Ovary (tissue), 10 donors: ENCODE measurements at regions of chr22 and their contacts with region 1.

Region 1: GRCh38 chr22:28019881-28020871 is 101.1 kb upstream of the PITPNB start:
- DNase-seq: peak; percentile 71 to 87 (median 84)
- H3K4me3 ChIP-seq: no peak overlapping the region
- H3K27ac ChIP-seq: no peak overlapping the region
- H3K4me1 ChIP-seq: peaks cover 12% of the 10 kb centered on the region
- H3K27me3 ChIP-seq: no peaks in the 10 kb centered on the region
- CTCF ChIP-seq: peak; percentile 83 to 95 (median 89)
- EP300 ChIP-seq: no peak
- POLR2A ChIP-seq: no peak

Region 2: GRCh38 chr22:27937453-27937852 is 82.7 kb before region 1 on chr22:
- intact Hi-C with region 1: no loop called
- DNase-seq: no peak
- H3K4me3 ChIP-seq: no peak overlapping the region
- H3K27ac ChIP-seq: no peak overlapping the region
- H3K4me1 ChIP-seq: no peaks in the 10 kb centered on the region
- H3K27me3 ChIP-seq: no peaks in the 10 kb centered on the region
- CTCF ChIP-seq: no peak
- EP300 ChIP-seq: no peak
- POLR2A ChIP-seq: no peak

Region 3: GRCh38 chr22:28442264-28442710 is 422.1 kb after region 1 on chr22:
- intact Hi-C with region 1: loop called in 2 of 4 experiments (anchors 10 kb)
- DNase-seq: peak; percentile 80 to 91 (median 86)
- H3K4me3 ChIP-seq: peak overlapping the region; percentile 56
- H3K27ac ChIP-seq: peak overlapping the region; percentile 28 to 79
- H3K4me1 ChIP-seq: peaks cover 13% of the 10 kb centered on the region
- H3K27me3 ChIP-seq: no peaks in the 10 kb centered on the region
- CTCF ChIP-seq: peak; percentile 72 to 80 (median 78)
- EP300 ChIP-seq: no peak
- POLR2A ChIP-seq: no peak

Region 4: GRCh38 chr22:28582806-28583205 is 562.6 kb after region 1 on chr22:
- intact Hi-C with region 1: loop called in 1 of 4 experiments (anchors 10 kb)
- DNase-seq: no peak
- H3K4me3 ChIP-seq: no peak overlapping the region
- H3K27ac ChIP-seq: no peak overlapping the region
- H3K4me1 ChIP-seq: no peaks in the 10 kb centered on the region
- H3K27me3 ChIP-seq: no peaks in the 10 kb centered on the region
- CTCF ChIP-seq: no peak
- EP300 ChIP-seq: no peak
- POLR2A ChIP-seq: no peak

Region 5: DNA sequence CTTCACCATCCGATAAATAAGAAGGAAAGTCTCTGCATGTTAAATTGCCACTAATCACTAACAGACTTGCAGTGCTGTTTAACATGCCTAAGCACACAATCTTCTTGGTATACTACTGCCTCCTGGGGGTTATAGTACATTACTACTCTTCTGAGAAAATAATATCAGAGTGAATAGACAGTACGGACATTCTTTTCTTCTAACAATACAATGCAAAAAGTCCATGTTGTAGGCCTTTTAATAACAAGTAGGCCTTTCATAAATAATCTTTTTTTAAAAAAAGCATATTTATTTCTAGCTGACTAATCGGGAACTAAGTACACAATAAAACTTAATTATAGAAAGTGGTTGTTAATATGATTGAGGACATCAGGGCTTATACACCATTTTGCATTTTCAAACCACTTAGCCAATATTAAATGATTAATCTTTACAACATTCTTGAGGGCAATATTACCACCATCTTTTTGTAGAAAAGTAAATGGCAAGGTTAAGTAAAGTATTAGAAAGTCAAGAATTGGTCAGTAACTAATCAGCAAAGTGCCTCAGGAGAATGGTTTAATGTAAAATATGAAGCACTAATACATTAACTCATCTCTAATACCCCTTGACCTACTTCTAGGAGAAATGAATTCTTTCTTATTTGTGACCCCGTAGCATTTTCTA is 574.8 kb after region 1 on chr22:
- intact Hi-C with region 1: loop called in 3 of 4 experiments (anchors 2 to 5 kb)
- DNase-seq: no peak
- H3K4me3 ChIP-seq: no peak overlapping the region
- H3K27ac ChIP-seq: no peak overlapping the region
- H3K4me1 ChIP-seq: no peaks in the 10 kb centered on the region
- H3K27me3 ChIP-seq: no peaks in the 10 kb centered on the region
- CTCF ChIP-seq: peak; percentile 42 to 87 (median 79)
- EP300 ChIP-seq: no peak
- POLR2A ChIP-seq: no peak

Region 6: GRCh38 chr22:28829358-28830181 is 809.4 kb after region 1 on chr22:
- intact Hi-C with region 1: loop called in 1 of 4 experiments (anchors 10 kb)
- DNase-seq: peak; percentile 76 to 86 (median 86)
- H3K4me3 ChIP-seq: no peak overlapping the region
- H3K27ac ChIP-seq: no peak overlapping the region
- H3K4me1 ChIP-seq: no peaks in the 10 kb centered on the region
- H3K27me3 ChIP-seq: no peaks in the 10 kb centered on the region
- CTCF ChIP-seq: peak; percentile 82 to 94 (median 93)
- EP300 ChIP-seq: no peak
- POLR2A ChIP-seq: no peak